GM18951 (cell line): ENCODE measurements at regions of chr17 and their contacts with region 1.

Region 1: DNA sequence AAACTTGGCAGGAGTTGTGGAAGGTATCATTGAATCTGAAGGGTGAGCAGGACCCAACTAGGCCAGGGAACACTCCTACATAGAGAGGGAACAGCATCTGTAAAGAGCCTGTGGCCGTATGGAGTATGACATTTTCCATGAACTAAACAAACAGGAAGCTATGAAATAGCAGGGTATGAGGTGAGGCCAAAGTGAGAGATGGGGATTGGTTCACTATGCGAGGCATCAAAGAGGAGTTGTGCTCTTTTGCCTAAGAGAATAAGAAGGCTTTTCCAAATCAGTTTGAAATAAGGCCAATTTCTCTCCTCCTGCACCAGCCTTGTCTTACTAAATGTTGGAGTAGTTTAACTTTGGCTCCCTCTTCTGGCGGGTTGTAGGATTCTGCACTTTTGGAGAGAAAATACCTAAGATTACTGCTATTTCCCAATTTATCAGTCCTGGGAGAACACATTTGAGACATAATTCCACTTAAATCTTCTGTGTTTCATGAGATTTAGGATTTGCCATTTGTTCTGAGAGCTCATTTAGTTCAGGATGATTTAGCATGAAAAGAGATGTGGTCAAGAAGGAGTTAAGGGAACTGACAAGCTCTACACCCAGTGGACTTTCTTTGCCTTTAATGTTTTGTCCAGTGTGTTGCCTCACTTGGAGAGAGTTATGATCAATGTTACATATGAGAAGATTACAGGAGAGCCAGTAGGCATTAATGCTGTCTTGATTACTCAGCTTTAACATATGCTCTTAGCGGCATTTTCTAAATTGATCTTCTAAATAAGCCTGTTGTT is 55.4 kb downstream of the TNRC6C start:
- POLR2A ChIP-seq: no peak

Region 2: DNA sequence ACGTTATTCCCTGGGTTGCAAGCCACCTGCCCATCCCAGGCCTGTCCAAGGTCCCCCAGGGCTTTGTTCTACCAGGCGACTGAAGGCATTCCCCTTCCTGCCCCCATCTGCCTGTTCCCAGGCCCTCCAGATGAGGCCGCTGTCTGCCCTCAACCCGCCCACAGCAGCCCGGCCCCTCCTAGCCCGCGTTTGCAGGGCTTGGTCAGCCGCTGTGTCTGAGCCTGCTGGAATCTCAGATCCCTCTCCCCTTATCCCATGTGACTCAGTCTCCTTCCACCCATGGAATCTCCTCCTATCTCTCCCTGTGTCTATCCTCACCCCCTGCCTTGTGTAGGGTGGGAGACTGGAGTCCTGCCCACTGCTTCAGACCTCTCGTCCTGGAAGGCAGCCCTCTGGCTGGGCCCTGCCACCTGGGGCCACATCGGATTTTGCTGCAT is 241.4 kb before region 1 on chr17:
- in situ Hi-C with region 1: loop called (anchors 5 kb)
- POLR2A ChIP-seq: no peak

Region 3: DNA sequence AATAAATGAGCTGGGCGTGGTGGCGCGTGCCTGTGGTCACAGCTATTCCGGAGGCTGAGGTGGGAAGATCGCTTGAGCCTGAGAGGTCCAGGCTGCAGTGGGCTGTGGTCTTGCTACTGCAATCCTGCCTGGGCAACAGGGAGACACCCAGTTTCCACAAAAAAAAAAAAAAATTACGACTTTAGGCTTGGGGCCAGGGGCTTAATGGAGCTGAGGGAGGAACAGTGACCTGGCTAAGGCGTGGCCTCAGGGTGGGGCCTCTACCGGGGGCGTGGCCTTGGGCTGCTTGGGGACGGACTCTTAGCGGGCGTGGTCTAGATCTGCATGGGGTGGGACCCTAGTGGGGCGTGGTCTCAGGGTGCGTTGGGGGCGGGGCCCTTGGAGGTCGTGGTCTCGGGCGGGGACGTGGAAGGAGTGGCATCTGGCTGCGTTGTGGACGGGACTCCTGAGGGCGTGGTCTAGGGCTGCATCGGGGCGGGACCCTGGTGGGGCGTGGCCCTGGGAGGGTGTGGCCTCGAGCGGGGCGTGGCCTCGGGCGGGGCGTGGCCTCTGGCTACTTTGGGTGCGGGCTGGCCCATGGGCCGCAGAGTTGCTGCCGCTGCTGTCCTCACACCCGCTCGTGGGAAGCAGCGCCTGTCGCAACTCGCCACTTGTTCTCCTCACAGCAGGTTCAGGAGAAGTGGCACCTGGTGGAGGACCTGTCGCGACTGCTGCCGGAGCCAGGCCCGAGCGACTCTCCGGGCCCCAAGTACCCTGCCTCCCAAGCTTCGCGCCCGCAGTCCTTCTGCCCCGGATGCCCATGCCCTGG is 126.5 kb after region 1 on chr17:
- in situ Hi-C with region 1: no loop called
- POLR2A ChIP-seq: peak; percentile 63